Transverse colon (tissue), 4 donors: ENCODE measurements at regions of chr2 and their contacts with region 1.

Region 1: GRCh38 chr2:63506320-63506719 is 82.0 kb downstream of the WDPCP start:
- DNase-seq: no peak
- H3K4me3 ChIP-seq: no peak overlapping the region
- H3K27ac ChIP-seq: no peak overlapping the region
- H3K4me1 ChIP-seq: no peaks in the 10 kb centered on the region
- H3K27me3 ChIP-seq: no peaks in the 10 kb centered on the region
- CTCF ChIP-seq: no peak
- EP300 ChIP-seq: no peak
- POLR2A ChIP-seq: no peak

Region 2: DNA sequence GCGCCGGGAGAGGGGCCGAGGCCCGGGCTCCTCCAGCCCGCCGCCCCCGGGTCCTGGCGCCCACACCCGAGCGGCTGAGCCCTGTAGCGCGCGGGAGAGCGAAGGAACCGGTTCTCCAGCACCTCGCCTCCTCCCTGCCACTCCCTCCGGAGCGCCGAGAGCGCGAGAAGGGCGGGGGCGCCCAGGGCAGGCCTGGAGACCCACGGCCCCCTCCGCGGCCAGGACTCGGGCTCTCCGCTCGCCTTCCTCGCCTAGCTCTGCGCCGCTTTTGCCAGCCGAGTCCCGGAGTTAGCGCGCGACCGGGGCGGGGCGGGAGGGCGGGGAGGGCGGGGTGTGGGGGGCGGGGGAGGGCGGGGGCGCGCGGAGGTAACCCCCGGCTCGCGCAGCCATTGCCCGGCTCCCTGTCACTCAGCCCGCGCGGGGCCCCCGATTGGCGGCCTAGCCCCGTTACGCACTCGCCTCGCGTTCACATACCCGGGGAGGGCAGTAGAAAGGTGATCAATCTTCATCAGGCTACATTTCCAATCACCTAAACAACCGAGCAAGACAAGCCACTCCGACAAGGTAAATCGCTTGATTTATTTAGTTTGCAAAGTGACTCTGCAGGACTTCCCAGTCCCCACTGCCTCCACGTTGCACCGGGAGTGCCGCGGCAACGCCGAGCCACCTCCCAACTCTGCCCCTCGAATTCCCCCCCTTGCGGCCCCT is 455.8 kb before region 1 on chr2 and contains the start of gene OTX1:
- in situ Hi-C with region 1: no loop called
- intact Hi-C with region 1: no loop called
- DNase-seq: peak; percentile 59
- H3K4me3 ChIP-seq: peak within 1 kb of the TSS; percentile 31 to 58 (median 40)
- H3K27ac ChIP-seq: no peak within 1 kb of the TSS
- H3K4me1 ChIP-seq: peaks cover 30 to 68% (median 60%) of the 10 kb centered on the region in 4 donors
- H3K27me3 ChIP-seq: peaks cover 100% of the 10 kb centered on the region
- CTCF ChIP-seq: no peak
- EP300 ChIP-seq: no peak
- POLR2A ChIP-seq: no peak
- total RNA-seq, gene OTX1: not detected

Region 3: DNA sequence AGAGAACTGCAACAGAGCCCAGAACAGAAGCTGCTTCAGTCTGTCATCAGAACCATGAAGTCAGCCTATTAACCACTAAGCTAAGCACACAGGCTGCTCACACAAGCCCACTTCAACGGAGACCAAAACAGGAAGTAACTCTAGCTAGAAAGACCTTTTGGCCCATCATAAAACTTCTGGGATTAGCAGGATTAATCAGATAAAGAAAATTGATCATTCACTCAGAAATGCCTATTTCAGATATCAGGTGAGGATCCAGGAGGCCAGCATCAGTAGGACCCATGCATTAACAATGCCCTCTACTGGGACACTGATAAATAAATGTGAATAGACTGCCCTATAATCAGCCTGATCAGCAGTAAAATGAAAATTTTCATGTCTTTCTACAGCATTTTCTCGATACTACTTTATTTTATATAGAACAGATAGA is 19.4 kb before region 1 on chr2:
- in situ Hi-C with region 1: no loop called
- intact Hi-C with region 1: loop called (anchors 1 kb)
- DNase-seq: no peak
- H3K4me3 ChIP-seq: no peak overlapping the region
- H3K27ac ChIP-seq: no peak overlapping the region
- H3K4me1 ChIP-seq: no peaks in the 10 kb centered on the region
- H3K27me3 ChIP-seq: no peaks in the 10 kb centered on the region
- CTCF ChIP-seq: no peak
- EP300 ChIP-seq: no peak
- POLR2A ChIP-seq: no peak

Region 4: GRCh38 chr2:63614983-63615945 is 108.9 kb after region 1 on chr2:
- in situ Hi-C with region 1: no loop called
- intact Hi-C with region 1: no loop called
- DNase-seq: no peak
- H3K4me3 ChIP-seq: no peak overlapping the region
- H3K27ac ChIP-seq: no peak overlapping the region
- H3K4me1 ChIP-seq: no peaks in the 10 kb centered on the region
- H3K27me3 ChIP-seq: no peaks in the 10 kb centered on the region
- CTCF ChIP-seq: no peak
- EP300 ChIP-seq: no peak
- POLR2A ChIP-seq: no peak

Region 5: GRCh38 chr2:64018923-64019718 is 512.8 kb after region 1 on chr2 and contains the start of gene VPS54:
- in situ Hi-C with region 1: no loop called
- intact Hi-C with region 1: no loop called
- DNase-seq: peak; percentile 63
- H3K4me3 ChIP-seq: peak within 1 kb of the TSS; percentile 76 to 87 (median 84)
- H3K27ac ChIP-seq: peak within 1 kb of the TSS; percentile 97 to 99 (median 98)
- H3K4me1 ChIP-seq: peaks cover 14 to 55% (median 30%) of the 10 kb centered on the region in 4 donors
- H3K27me3 ChIP-seq: no peaks in the 10 kb centered on the region
- CTCF ChIP-seq: no peak
- EP300 ChIP-seq: no peak
- POLR2A ChIP-seq: peak; percentile 59
- total RNA-seq, gene VPS54: 4.1 to 27.6 (median 18.6) TPM